ENCODE measurements at regions of chr16 and their contacts with region 1.

Region 1: GRCh38 chr16:19521471-19522396 is at the start of gene GDE1:
- DNase-seq: peak; percentile 88
- ATAC-seq: peak; percentile 78
- H3K4me3 Mint-ChIP-seq: peak within 1 kb of the TSS; percentile 95
- H3K27ac Mint-ChIP-seq: peak within 1 kb of the TSS; percentile 89
- H3K4me1 Mint-ChIP-seq: peaks cover 43% of the 10 kb centered on the region
- H3K27me3 Mint-ChIP-seq: no peaks in the 10 kb centered on the region
- CTCF ChIP-seq: no peak
- total RNA-seq, gene GDE1: 17.0 and 18.3 TPM in 2 replicates

Region 2: DNA sequence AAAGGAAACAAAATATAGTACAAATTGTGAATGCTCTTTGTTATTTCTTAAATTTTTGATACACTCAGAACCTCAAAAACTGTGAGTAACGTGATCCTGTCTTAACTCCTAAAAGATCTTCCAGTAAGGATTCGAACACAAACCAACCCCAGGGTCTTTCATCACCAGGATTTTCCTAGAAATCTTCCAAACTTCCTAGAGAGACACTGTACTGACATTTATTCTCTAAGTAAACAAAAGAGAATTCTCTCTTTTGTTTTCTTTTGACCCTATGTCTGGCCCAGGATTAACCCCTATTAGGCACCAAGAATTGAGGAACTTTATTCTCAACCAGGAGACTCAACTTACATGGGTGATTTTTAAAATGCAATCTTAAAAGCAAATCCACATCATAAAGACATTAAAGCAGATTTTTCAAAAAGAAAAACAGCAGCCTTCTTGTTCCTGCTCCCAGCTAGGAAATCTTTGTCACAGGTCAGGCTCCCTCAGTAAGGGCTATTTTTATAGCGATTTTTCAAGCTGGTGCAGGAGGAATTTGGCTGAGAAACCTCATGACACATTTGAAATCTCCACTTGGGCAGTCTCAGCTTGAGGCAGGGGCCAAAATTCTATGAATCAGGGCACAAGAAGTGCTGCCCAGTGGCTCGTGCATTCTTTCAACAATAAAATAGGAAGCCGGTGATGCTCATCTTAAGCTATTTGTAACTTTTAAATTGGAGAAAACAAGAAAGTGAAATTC is 589.3 kb before region 1 on chr16:
- CTCF ChIA-PET with region 1: no interaction called
- POLR2A ChIA-PET with region 1: no interaction called
- intact Hi-C with region 1: loop called (anchors 5 kb)
- DNase-seq: no peak
- ATAC-seq: no peak
- H3K4me3 Mint-ChIP-seq: no peak overlapping the region
- H3K27ac Mint-ChIP-seq: peak overlapping the region; percentile 54
- H3K4me1 Mint-ChIP-seq: peaks cover 15% of the 10 kb centered on the region
- H3K27me3 Mint-ChIP-seq: peaks cover 4% of the 10 kb centered on the region
- CTCF ChIP-seq: no peak

Region 3: DNA sequence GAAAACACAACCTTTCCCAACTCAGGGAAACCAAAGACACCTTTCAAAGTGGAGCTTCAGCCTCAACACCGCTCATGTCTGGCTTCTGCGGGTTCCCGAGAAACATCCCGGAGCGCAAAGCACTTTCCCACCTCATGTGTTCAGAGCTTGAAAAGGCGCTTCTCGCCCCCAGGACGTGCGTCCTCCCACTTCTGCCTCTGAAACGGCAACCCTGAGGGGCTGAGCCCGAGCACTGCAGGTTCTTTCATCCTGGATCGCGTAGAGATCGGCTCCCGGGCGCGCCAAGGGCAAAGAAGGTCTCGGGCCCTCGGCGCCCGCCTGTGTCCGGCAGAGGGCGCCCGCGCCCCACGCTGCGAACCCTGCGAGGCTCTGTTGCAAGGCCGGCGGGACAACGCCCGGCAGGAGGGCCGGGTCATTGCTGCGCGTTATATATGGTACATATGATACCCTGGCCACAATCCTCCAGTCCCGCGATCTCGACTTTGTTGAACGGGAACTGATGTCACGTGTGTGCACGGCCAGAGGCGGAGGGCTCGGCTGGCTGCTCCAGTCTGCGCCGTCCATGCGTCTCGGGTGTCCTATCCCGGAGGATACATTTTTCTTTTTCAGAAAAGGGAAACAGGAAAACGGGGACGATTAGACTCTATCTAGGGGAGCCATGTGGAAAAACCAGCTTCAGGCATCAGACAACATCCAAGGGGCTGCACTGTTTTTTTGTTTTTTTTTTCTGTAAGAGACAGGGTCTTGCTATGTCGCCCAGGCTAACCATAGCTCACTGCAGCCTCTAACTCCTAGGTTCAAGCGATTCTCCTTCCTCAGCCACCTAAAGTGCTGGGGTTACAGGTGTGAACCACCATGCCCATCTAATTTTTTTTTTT is 435.2 kb before region 1 on chr16:
- CTCF ChIA-PET with region 1: no interaction called
- POLR2A ChIA-PET with region 1: no interaction called
- intact Hi-C with region 1: loop called (anchors 5 kb)
- DNase-seq: peak; percentile 82
- ATAC-seq: peak; percentile 97
- H3K4me3 Mint-ChIP-seq: peak overlapping the region; percentile 63
- H3K27ac Mint-ChIP-seq: no peak overlapping the region
- H3K4me1 Mint-ChIP-seq: peaks cover 5% of the 10 kb centered on the region
- H3K27me3 Mint-ChIP-seq: peaks cover 2% of the 10 kb centered on the region
- CTCF ChIP-seq: peak; percentile 91

Region 4: GRCh38 chr16:19210280-19210924 is 311.3 kb before region 1 on chr16:
- CTCF ChIA-PET with region 1: no interaction called
- POLR2A ChIA-PET with region 1: interaction called, 3 read pairs
- intact Hi-C with region 1: loop called (anchors 5 kb)
- DNase-seq: no peak
- ATAC-seq: peak; percentile 69
- H3K4me3 Mint-ChIP-seq: peak overlapping the region; percentile 73
- H3K27ac Mint-ChIP-seq: peak overlapping the region; percentile 98
- H3K4me1 Mint-ChIP-seq: peaks cover 74% of the 10 kb centered on the region
- H3K27me3 Mint-ChIP-seq: no peaks in the 10 kb centered on the region
- CTCF ChIP-seq: no peak

Region 5: DNA sequence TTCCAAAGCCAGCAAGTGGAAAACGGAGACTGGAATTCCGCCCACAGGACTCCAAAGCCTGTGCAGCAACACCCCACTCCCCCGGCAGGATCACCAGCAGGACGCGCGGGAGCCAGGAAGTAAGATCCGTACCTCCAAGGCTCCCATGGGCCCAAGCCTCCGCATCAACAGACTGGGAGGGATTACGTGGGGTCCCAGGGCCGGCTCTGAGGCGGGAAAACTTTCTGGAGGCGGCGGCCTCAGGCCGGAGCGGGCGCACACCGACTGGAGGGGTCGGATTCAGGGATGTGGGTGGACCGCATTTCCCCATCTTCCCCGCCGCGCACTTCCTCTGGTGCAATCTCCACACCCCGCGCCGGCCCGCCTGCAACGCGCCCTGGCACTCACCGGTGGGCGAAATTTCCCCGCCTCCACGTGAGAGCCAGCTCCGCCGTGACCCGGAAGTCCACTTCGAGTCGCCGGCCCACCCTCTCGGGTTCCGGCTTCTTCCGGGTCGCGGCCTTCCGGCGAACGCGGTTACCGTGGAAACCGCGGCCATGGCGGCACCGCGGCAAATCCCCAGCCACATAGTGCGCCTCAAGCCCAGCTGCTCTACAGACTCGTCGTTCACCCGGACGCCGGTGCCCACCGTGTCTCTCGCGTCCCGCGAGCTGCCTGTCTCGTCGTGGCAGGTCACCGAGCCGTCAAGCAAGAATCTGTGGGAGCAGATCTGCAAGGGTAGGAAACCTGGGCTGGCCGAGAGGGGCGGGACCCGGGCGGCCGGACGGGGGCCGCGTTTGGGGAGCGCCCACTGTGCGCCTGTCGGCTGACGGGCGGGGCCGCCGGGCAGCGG is 196.3 kb after region 1 on chr16 and contains the starts of genes IQCK and KNOP1:
- CTCF ChIA-PET with region 1: no interaction called
- POLR2A ChIA-PET with region 1: interaction called, 12 read pairs
- intact Hi-C with region 1: loop called (anchors 5 kb)
- DNase-seq: peak; percentile 85
- ATAC-seq: peak; percentile 92
- H3K4me3 Mint-ChIP-seq: peak within 1 kb of the TSS; percentile 94
- H3K27ac Mint-ChIP-seq: peak within 1 kb of the TSS; percentile 65
- H3K4me1 Mint-ChIP-seq: peaks cover 24% of the 10 kb centered on the region
- H3K27me3 Mint-ChIP-seq: no peaks in the 10 kb centered on the region
- CTCF ChIP-seq: no peak
- total RNA-seq, gene IQCK: 3.2 and 3.8 TPM in 2 replicates
- total RNA-seq, gene KNOP1: 19.0 and 20.5 TPM in 2 replicates

Region 6: GRCh38 chr16:20741554-20742285 is 1220.0 kb after region 1 on chr16 and contains the start of gene THUMPD1:
- CTCF ChIA-PET with region 1: no interaction called
- POLR2A ChIA-PET with region 1: no interaction called
- intact Hi-C with region 1: loop called (anchors 2 kb)
- DNase-seq: peak; percentile 92
- ATAC-seq: peak; percentile 95
- H3K4me3 Mint-ChIP-seq: peak within 1 kb of the TSS; percentile 94
- H3K27ac Mint-ChIP-seq: peak within 1 kb of the TSS; percentile 95
- H3K4me1 Mint-ChIP-seq: peaks cover 27% of the 10 kb centered on the region
- H3K27me3 Mint-ChIP-seq: no peaks in the 10 kb centered on the region
- CTCF ChIP-seq: no peak
- total RNA-seq, gene THUMPD1: 41.1 and 42.2 TPM in 2 replicates

Region 7: GRCh38 chr16:21116148-21116693 is 1594.5 kb after region 1 on chr16:
- CTCF ChIA-PET with region 1: no interaction called
- POLR2A ChIA-PET with region 1: no interaction called
- intact Hi-C with region 1: no loop called
- DNase-seq: peak; percentile 20
- ATAC-seq: peak; percentile 84
- H3K4me3 Mint-ChIP-seq: peak overlapping the region; percentile 82
- H3K27ac Mint-ChIP-seq: peak overlapping the region; percentile 86
- H3K4me1 Mint-ChIP-seq: peaks cover 10% of the 10 kb centered on the region
- H3K27me3 Mint-ChIP-seq: no peaks in the 10 kb centered on the region
- CTCF ChIP-seq: no peak